ENCODE measurements at regions of chr1 and their contacts with region 1.

Region 1: DNA sequence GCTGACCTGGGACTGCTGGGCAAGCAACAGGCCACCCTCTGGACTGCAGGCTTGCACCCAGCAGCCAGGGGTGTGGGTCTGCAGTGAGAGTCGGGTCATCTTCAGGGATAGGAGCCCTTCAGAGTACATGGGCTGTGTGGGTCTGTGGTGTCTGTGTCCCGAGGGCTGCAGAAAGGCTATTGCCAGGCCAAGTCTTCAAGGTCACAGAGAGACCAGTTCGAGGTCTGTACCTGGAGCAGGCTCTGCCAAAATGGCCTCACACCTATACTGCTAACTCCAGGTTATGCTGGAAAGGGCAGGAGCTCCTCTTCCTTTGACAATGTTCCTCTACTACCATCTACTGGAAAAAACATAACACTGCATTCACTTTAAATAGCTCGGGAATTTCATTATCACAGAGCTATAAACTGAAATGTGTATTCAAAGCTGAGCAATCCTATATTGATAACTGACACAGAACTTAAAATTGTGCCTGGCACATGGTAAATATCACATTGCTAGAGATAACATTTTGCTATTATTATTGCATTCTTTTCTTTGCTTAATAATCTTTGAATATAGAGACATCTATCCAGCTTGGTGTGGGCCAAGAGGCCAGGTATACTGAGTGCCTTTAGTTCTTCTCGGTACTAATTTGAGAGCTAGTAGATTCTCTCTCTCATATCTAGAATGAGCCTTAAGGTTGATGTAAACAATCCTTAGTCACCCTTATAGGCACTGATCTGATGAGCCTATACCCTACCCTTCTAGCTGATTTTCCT is 6.9 kb upstream of the DNAH14 start:
- DNase-seq: peak; percentile 76
- H3K4me3 Mint-ChIP-seq: no peak overlapping the region
- H3K27ac Mint-ChIP-seq: no peak overlapping the region
- H3K4me1 Mint-ChIP-seq: peaks cover 4% of the 10 kb centered on the region
- H3K27me3 Mint-ChIP-seq: no peaks in the 10 kb centered on the region
- CTCF ChIP-seq: peak; percentile 99

Region 2: DNA sequence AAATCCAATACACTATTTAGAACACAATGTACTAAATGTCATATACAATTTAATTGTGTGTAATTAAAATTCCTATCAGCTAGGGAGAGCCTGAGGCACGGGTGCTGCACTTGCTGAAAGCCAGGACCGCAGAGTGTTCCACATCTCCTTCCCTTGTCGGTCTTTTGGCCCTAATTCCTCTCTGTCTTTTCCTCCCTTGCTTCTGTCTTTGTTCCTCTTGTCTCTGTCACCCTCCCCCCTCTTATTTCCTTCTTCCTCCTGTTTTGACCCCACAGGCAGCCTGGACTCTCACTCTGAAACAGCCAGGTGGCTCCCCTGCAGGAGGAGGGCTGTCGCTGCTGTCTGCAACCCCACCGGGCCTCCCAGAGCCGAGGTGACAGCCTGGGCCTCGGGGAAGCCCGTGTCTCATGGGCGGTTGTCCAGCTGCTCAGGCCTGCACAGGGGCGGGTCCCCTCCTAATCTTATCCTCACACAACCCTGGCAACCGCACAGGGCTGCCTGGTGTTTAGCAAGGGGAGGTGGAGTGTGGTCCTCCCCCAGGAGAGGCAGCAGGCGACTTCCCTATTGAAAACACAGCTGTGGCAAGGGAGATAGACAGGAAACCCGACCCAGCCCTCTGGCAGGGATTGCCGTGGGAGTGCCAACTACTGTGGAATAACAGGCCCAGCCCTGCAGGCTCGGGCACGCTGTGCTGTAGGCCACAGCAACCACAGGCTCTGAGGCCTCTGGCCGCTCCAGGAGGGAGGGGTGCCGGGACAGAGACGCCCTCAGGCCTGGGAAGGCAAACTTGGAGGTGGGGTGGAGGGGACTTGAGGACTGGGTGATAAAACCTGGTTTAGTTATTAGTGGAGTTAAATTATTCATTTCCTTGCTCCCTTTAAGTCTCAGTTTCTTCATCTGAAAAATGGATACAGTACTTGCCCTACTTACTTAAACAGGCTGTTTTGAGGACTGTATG is 419.1 kb before region 1 on chr1:
- CTCF ChIA-PET with region 1: interaction called, 41 read pairs
- POLR2A ChIA-PET with region 1: interaction called, 3 read pairs
- intact Hi-C with region 1: no loop called
- DNase-seq: peak; percentile 100
- H3K4me3 Mint-ChIP-seq: peak overlapping the region; percentile 48
- H3K27ac Mint-ChIP-seq: peak overlapping the region; percentile 92
- H3K4me1 Mint-ChIP-seq: peaks cover 72% of the 10 kb centered on the region
- H3K27me3 Mint-ChIP-seq: no peaks in the 10 kb centered on the region
- CTCF ChIP-seq: peak; percentile 10

Region 3: DNA sequence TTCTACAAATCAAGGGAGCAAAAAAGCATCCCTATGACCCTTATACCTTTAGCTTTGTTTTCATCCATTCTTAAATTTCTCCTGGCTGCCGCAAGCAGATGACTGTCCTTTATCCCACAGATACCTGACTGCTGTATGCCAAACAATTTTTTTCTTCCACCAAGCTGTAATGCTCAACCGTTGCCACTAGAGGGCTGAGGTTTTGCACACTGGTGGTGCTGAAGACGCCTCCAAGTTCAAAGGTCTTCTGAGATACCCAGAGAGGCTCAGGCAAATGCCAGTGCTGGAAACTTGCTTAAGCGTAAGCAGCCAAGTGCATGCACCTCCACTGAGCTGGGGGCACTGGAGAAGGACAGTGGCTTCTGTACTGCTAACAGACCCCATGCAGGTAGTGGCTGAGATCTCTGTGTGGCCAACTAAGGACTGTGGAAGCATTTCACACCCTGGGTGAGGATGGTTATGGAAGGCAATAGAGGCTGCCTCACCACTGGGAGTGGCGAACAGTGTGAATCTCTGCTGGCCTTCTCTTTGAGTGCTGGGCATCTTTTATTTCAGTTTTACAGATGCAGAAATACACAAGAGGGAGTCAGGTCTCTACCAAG is 277.9 kb before region 1 on chr1:
- CTCF ChIA-PET with region 1: interaction called, 159 read pairs
- POLR2A ChIA-PET with region 1: interaction called, 3 read pairs
- intact Hi-C with region 1: loop called (anchors 1 kb)
- DNase-seq: peak; percentile 83
- H3K4me3 Mint-ChIP-seq: no peak overlapping the region
- H3K27ac Mint-ChIP-seq: no peak overlapping the region
- H3K4me1 Mint-ChIP-seq: no peaks in the 10 kb centered on the region
- H3K27me3 Mint-ChIP-seq: peaks cover 21% of the 10 kb centered on the region
- CTCF ChIP-seq: peak; percentile 97

Region 4: DNA sequence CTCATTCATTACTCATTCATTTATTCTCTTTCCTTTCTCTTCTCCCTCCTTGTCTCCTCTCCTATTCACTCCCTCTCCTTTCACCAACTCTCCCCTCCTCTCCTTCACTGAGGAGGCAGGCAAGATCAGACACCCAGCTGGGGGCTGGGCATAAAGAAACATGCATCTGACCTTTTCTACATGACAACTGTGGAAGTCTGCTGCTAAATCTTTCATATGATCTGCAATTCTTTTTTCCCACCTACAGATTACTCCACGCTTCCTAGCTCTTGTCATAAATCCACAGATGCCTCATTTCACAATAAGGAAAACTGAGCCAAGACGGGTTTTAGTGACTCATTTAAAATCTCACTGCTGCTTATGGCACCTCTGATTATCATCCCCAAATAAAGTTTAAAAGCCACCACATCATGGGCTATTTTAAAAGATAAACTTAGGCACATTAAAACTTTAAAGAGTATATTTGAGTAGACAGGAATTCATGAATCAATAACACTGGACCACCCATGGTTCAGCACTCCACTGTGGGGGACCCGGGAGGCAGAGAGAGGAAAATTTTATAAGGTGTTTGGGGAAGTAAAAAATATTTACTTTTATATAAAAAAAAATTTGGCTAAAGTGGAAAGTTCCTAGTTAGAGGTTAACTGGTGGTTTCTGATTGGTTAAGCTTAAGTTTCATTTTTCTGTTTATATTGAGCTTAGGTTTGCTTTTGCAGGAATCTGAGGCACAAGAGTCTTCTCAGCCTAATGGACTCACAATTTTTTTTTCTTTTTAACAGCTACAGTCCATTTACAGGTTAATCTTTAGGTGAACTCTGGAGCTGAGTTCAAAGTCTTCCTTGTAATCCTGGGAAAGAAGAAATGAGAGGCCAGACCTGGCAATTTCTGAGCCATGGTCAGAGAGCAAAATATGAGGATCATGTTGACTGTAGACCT is 48.9 kb before region 1 on chr1:
- CTCF ChIA-PET with region 1: interaction called, 13 read pairs
- POLR2A ChIA-PET with region 1: no interaction called
- intact Hi-C with region 1: no loop called
- DNase-seq: peak; percentile 93
- H3K4me3 Mint-ChIP-seq: no peak overlapping the region
- H3K27ac Mint-ChIP-seq: no peak overlapping the region
- H3K4me1 Mint-ChIP-seq: no peaks in the 10 kb centered on the region
- H3K27me3 Mint-ChIP-seq: peaks cover 13% of the 10 kb centered on the region
- CTCF ChIP-seq: no peak

Region 5: DNA sequence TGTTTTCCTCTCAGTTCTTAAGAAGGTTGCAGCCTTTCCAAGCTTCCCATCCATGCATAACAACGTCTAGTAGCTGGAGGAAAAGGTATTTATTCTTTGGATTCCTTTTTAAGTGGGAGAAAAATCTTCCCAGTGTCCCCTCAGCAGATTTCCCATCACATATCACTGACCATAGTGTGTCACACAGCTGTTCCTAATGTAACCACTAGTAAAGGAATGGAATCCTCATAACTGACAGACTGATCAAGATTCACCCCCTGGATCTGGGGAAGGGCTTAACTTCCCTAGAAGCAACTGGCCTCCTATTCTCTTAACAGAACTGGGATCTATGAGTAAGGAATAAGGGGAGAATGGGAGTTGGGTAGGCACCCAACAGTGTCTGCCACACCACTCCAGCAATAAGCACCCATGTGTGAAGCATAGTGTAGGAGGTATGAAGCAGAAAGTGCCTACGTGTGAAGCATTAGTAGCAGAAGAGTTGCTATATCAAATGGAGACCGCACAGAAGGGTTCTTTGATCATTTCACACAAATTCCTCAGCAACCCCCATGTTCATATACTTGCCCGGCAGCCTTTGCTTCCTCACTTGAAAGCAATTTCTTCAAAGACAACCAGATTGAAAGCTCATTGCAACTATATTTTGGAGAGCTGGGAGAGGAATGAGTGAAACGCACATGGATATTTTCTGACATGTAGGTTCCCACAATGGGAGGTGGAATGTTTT is 21.3 kb before region 1 on chr1:
- CTCF ChIA-PET with region 1: interaction called, 47 read pairs
- POLR2A ChIA-PET with region 1: no interaction called
- intact Hi-C with region 1: no loop called
- DNase-seq: no peak
- H3K4me3 Mint-ChIP-seq: no peak overlapping the region
- H3K27ac Mint-ChIP-seq: no peak overlapping the region
- H3K4me1 Mint-ChIP-seq: no peaks in the 10 kb centered on the region
- H3K27me3 Mint-ChIP-seq: peaks cover 56% of the 10 kb centered on the region
- CTCF ChIP-seq: no peak

Region 6: DNA sequence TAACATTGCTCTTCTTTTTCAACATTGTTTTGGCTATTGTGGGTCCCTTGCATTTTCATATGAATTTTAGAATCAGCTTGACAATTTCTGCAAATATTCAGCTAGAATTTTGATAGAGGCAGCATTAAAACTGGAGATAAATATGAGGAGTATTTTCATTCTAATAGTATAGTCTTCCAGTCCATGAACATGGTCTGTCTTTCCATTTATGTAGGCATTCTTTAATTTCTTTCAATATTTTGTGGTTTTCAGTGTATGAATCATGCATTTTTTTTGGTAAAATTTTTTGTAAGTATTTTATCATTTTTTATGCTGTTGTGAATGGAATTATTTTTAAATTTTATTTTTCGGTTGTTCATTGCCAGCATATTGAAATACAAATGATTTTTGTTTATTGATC is 104.1 kb after region 1 on chr1:
- CTCF ChIA-PET with region 1: no interaction called
- POLR2A ChIA-PET with region 1: no interaction called
- intact Hi-C with region 1: no loop called
- DNase-seq: no peak
- H3K4me3 Mint-ChIP-seq: no peak overlapping the region
- H3K27ac Mint-ChIP-seq: no peak overlapping the region
- H3K4me1 Mint-ChIP-seq: no peaks in the 10 kb centered on the region
- H3K27me3 Mint-ChIP-seq: no peaks in the 10 kb centered on the region
- CTCF ChIP-seq: no peak